Naive thymus-derived CD4-positive, alpha-beta T cell (primary cell): ENCODE measurements at regions of chr10 and their contacts with region 1.

Region 1: GRCh38 chr10:46106410-46107255 is 60.6 kb upstream of the MSMB start:
- DNase-seq: peak in 8 of 9 donors; percentile 34 to 67 (median 40)
- ATAC-seq: peak; percentile 95
- H3K4me3 ChIP-seq: peak overlapping the region; percentile 54
- H3K4me3 Mint-ChIP-seq: peak overlapping the region; percentile 82 to 98 (median 91)
- H3K27ac ChIP-seq: peak overlapping the region; percentile 72
- H3K27ac Mint-ChIP-seq: peak overlapping the region in 8 of 9 donors; percentile 1 to 93 (median 76)
- H3K4me1 ChIP-seq: peaks cover 6 to 7% of the 10 kb centered on the region in 2 donors
- H3K4me1 Mint-ChIP-seq: peaks cover 10 to 23% (median 17%) of the 10 kb centered on the region in 7 donors
- H3K27me3 ChIP-seq: no peaks in the 10 kb centered on the region
- H3K27me3 Mint-ChIP-seq: peaks cover 0 to 30% (median 0%) of the 10 kb centered on the region in 5 donors

Region 2: GRCh38 chr10:46092524-46093081 is 14.0 kb before region 1 on chr10:
- CTCF ChIA-PET with region 1: no interaction called
- POLR2A ChIA-PET with region 1: interaction called, 4 read pairs
- intact Hi-C with region 1: loop called in 1 of 2 experiments (anchors 2 kb)
- DNase-seq: peak in 7 of 9 donors; percentile 47 to 78 (median 74)
- ATAC-seq: peak; percentile 49
- H3K4me3 ChIP-seq: peak overlapping the region; percentile 72
- H3K4me3 Mint-ChIP-seq: no peak overlapping the region
- H3K27ac ChIP-seq: peak overlapping the region; percentile 80
- H3K27ac Mint-ChIP-seq: no peak overlapping the region
- H3K4me1 ChIP-seq: peaks cover 63 to 73% of the 10 kb centered on the region in 2 donors
- H3K4me1 Mint-ChIP-seq: peaks cover 4 to 44% (median 29%) of the 10 kb centered on the region in 7 donors
- H3K27me3 ChIP-seq: no peaks in the 10 kb centered on the region
- H3K27me3 Mint-ChIP-seq: no peaks in the 10 kb centered on the region